Mammary epithelial cell (primary cell): ENCODE measurements at regions of chr5 and their contacts with region 1.

Region 1: DNA sequence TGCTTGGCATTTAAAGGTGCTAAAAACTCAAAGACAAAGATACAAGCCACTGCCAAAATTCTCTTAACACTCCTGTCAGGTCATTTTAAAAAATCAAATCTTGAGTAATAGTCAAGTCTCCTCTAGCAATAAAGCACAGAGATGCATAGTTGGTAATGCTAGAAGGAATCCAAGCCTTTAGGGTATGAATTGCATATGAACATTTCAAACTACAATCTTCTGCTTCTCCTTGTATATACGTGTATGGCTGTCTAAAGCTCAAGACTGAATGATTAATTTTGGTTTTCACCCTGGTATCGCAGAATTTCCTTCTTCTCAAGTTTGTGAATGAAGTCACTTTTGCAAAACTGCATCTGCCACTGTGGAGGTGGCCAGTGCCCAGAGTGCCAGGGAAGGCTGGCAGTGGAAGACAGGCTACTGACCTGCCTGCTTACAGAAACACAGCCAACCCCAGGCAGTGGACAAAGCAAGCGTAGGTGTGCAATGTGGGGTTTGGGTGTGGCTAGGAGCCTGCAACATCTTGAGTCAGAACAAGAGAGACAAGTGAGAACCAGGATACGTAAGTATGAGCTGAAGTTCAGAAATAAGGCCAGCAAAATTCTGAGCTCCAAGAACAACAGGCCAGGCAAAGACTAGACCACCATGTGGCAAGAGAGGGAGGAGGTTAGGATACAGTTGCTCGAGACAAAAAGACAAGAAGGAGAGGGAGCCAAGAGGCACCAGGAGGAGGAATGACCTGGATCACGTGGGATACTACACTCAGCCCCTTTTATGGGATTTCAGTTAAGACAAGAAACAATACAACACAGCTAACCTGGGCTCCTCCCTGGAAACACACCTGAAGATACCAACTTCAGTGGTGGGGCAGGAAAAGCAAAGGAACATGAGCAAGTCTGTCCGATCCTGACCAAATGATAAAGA is 22.6 kb downstream of the MYO10 start:
- DNase-seq: peak; percentile 66
- H3K4me3 ChIP-seq: peak overlapping the region; percentile 9 to 19 (median 15)
- H3K27ac ChIP-seq: peak overlapping the region; percentile 87
- H3K4me1 ChIP-seq: peaks cover 61% of the 10 kb centered on the region
- H3K27me3 ChIP-seq: no peaks in the 10 kb centered on the region
- CTCF ChIP-seq: no peak

Region 2: DNA sequence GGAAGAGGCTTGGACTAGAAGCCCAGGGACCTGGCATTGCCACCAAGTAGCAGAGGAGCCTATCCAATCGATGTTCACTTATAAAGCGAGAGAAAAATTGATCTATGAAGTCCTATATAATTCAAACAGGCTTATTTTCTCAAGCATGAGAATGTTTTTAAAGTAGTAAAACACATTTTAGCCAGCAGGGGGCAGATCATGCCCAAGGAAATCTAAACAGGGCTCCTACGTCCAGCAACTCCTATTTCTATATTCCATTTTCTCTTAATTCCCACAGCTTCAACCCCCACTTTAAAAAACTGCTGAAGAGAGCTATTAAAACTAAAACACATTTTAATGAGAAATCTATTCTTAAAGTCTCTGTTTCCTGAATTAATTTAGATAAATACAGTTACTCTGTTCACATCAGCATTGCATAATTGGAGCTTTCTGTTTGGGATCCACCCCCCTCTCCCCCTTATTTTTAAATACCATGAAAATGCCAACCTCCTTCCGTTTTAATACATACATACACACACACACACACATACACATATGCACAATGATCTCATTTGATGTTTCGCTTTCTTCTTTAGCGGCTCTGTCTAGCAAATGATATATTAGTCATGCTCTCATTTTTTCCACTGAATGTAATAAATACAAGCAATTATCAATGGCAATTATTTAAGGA is 122.3 kb before region 1 on chr5:
- CTCF ChIA-PET with region 1: no interaction called
- dilution Hi-C with region 1: no loop called
- in situ Hi-C with region 1: no loop called
- intact Hi-C with region 1: loop called (anchors 5 kb)
- DNase-seq: peak; percentile 27
- H3K4me3 ChIP-seq: no peak overlapping the region
- H3K27ac ChIP-seq: no peak overlapping the region
- H3K4me1 ChIP-seq: peaks cover 3% of the 10 kb centered on the region
- H3K27me3 ChIP-seq: no peaks in the 10 kb centered on the region
- CTCF ChIP-seq: peak; percentile 44 to 61

Region 3: DNA sequence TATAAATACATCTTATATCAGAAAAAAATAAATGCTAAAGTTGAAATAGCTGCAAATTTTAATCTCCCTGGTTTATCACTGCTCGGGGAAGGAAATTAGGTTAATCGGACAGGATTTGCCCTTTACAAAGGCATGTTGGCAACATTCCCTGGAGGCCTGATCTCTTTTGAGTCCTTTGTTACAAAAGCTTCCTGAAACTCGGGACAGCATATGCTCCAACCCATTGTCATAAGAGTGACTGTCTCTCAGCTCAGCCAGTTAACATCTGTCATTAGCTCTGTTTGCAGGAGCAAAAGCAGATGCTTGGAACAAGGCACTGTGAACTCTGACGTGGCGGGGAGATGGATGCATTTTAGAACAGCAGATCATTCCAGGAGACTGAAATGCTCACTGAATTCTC is 58.0 kb before region 1 on chr5:
- CTCF ChIA-PET with region 1: no interaction called
- dilution Hi-C with region 1: no loop called
- in situ Hi-C with region 1: no loop called
- intact Hi-C with region 1: loop called (anchors 1 kb)
- DNase-seq: no peak
- H3K4me3 ChIP-seq: no peak overlapping the region
- H3K27ac ChIP-seq: no peak overlapping the region
- H3K4me1 ChIP-seq: peaks cover 7% of the 10 kb centered on the region
- H3K27me3 ChIP-seq: no peaks in the 10 kb centered on the region
- CTCF ChIP-seq: no peak

Region 4: DNA sequence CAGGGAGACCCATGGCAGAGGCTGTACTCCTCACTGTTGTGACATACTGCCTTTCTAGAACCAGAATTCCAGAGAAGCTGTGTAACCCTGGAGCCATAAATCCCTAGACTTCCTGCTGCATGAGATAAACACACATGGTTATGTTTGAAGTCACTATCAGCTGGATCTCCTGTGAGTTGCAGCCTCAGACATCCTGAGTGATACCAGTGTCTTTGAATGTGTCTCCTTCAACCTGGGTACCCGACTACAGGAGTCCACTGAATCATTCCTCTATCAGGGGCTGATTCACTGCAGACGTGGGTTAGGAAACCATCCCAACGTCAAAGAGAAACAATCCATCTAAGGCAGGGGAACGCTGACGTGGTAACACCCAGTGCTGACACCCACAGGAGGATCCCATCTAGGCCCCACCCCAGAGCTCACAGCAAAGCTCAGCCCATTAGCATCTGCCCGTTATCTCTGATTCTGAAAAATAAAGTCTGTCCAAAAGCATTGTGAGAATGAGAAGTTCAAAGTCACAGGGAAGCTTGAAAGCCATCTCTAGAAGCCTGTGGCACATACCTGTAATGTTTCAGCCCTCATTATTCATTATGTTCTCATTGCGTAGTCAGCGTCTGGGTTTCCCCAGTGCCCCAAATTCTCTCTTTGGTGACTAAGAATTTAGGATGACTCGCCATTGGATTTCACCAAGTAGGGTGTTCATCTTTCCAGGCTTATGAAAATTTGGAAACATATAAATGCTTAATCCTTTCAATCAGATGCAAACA is 267.7 kb after region 1 on chr5:
- CTCF ChIA-PET with region 1: no interaction called
- dilution Hi-C with region 1: no loop called
- in situ Hi-C with region 1: no loop called
- intact Hi-C with region 1: loop called (anchors 5 kb)
- DNase-seq: peak; percentile 99
- H3K4me3 ChIP-seq: no peak overlapping the region
- H3K27ac ChIP-seq: peak overlapping the region; percentile 85
- H3K4me1 ChIP-seq: peaks cover 32% of the 10 kb centered on the region
- H3K27me3 ChIP-seq: no peaks in the 10 kb centered on the region
- CTCF ChIP-seq: peak in 1 of 2 donors; percentile 4